ENCODE measurements at regions of chr7 and their contacts with region 1.

Region 1: GRCh38 chr7:117092785-117093184 is 139.5 kb downstream of the ST7 start:
- DNase-seq: no peak
- H3K4me3 ChIP-seq: no peak overlapping the region
- H3K27ac ChIP-seq: no peak overlapping the region
- H3K4me1 ChIP-seq: peaks cover 8% of the 10 kb centered on the region
- H3K27me3 ChIP-seq: no peaks in the 10 kb centered on the region
- CTCF ChIP-seq: no peak

Region 2: GRCh38 chr7:117061751-117062150 is 31.0 kb before region 1 on chr7:
- CTCF ChIA-PET with region 1: no interaction called
- POLR2A ChIA-PET with region 1: interaction called, 16 read pairs
- intact Hi-C with region 1: no loop called
- DNase-seq: no peak
- H3K4me3 ChIP-seq: no peak overlapping the region
- H3K27ac ChIP-seq: no peak overlapping the region
- H3K4me1 ChIP-seq: peaks cover 1% of the 10 kb centered on the region
- H3K27me3 ChIP-seq: no peaks in the 10 kb centered on the region
- CTCF ChIP-seq: no peak

Region 3: DNA sequence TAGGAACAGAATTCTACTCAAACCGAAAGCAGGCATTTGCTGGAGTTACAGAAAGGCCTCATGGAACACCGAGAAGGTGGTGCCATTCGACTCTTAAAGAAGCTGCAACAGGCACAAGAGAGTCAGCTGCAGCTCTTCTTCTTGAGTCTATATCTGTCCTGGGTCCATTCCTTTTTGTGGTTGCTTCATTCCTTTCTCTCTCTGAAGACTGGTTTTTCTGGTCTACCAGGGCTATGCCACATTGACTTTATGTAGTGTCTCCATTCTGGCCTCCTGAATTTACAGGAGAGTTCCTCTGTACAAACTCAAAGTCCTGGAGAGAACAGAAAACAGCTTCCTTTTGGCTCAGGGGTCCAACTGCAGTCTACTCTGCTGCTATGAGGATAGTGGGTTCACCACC is 519.9 kb after region 1 on chr7:
- CTCF ChIA-PET with region 1: no interaction called
- POLR2A ChIA-PET with region 1: no interaction called
- intact Hi-C with region 1: no loop called
- DNase-seq: no peak
- H3K4me3 ChIP-seq: no peak overlapping the region
- H3K27ac ChIP-seq: no peak overlapping the region
- H3K4me1 ChIP-seq: no peaks in the 10 kb centered on the region
- H3K27me3 ChIP-seq: no peaks in the 10 kb centered on the region
- CTCF ChIP-seq: no peak